ENCODE measurements at regions of chr22 and their contacts with region 1.

Region 1: GRCh38 chr22:17638432-17639246 is at the start of gene BCL2L13:
- DNase-seq: peak; percentile 83 to 94 (median 90)
- H3K4me3 ChIP-seq: peak within 1 kb of the TSS; percentile 54 to 98 (median 90)
- H3K27ac ChIP-seq: peak within 1 kb of the TSS; percentile 77 to 99 (median 96)
- H3K27me3 ChIP-seq: no peaks in the 10 kb centered on the region
- CTCF ChIP-seq: peak in 20 of 56 donors; percentile 6 to 35 (median 21)
- total RNA-seq, gene BCL2L13: 64.1 to 146 (median 96.5) TPM

Region 2: GRCh38 chr22:17381237-17381914 is 257.3 kb before region 1 on chr22:
- intact Hi-C with region 1: loop called in 1 of 2 experiments (anchors 10 kb)
- DNase-seq: no peak
- H3K4me3 ChIP-seq: no peak overlapping the region
- H3K27ac ChIP-seq: no peak overlapping the region
- H3K27me3 ChIP-seq: peaks cover 0 to 6% (median 0%) of the 10 kb centered on the region in 45 donors
- CTCF ChIP-seq: no peak

Region 3: DNA sequence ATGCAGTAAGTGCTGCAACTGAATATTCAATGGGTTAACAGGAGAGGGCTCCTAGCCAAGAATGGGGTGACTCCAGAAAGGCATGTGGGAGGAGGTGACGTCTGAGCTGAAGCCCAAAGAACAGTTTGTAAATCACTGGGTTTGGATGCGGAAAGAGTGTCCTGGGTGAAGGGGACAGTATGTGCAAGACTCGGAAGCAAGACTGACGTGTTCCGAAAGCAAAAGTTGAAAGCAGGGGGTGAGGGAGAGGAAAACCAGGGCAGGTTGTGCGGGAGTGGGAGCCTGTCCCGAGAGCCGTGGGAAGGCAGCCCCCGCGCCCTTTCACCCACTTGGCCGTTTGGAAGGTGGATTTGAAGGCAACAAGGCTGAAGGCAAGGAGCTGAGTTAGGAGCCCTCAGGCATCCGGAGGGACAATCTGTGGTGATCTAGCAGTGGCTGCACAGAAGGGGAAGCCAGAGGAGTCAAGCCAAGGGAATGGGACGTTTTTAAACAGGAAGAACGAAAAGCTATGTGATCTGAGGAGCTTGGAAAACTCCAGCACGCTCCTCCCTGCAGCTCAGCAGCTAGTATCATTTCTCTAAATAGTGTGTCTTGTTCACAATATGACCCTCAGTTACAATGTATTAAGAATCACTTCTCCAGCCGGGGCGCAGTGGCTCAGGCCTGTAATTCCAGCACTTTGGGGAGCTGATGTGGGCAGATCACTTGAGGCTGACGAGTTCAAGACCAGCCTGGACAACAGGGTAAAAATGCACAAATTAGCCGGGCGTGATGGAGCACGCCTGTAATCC is 67.6 kb before region 1 on chr22:
- intact Hi-C with region 1: loop called in 1 of 2 experiments (anchors 5 kb)
- DNase-seq: peak in 9 of 10 donors; percentile 41 to 83 (median 69)
- H3K4me3 ChIP-seq: peak overlapping the region in 54 of 59 donors; percentile 5 to 61 (median 37)
- H3K27ac ChIP-seq: peak overlapping the region; percentile 10 to 99 (median 93)
- H3K27me3 ChIP-seq: no peaks in the 10 kb centered on the region
- CTCF ChIP-seq: no peak

Region 4: GRCh38 chr22:17628304-17629166 is 10.1 kb before region 1 on chr22 and contains the start of gene ATP6V1E1:
- intact Hi-C with region 1: loop called in 1 of 2 experiments (anchors 1 kb)
- DNase-seq: peak; percentile 94 to 99 (median 97)
- H3K4me3 ChIP-seq: peak within 1 kb of the TSS; percentile 68 to 100 (median 99)
- H3K27ac ChIP-seq: peak within 1 kb of the TSS; percentile 55 to 98 (median 92)
- H3K27me3 ChIP-seq: no peaks in the 10 kb centered on the region
- CTCF ChIP-seq: peak in 9 of 56 donors; percentile 7 to 31 (median 14)
- total RNA-seq, gene ATP6V1E1: 113 to 439 (median 333) TPM

Region 5: DNA sequence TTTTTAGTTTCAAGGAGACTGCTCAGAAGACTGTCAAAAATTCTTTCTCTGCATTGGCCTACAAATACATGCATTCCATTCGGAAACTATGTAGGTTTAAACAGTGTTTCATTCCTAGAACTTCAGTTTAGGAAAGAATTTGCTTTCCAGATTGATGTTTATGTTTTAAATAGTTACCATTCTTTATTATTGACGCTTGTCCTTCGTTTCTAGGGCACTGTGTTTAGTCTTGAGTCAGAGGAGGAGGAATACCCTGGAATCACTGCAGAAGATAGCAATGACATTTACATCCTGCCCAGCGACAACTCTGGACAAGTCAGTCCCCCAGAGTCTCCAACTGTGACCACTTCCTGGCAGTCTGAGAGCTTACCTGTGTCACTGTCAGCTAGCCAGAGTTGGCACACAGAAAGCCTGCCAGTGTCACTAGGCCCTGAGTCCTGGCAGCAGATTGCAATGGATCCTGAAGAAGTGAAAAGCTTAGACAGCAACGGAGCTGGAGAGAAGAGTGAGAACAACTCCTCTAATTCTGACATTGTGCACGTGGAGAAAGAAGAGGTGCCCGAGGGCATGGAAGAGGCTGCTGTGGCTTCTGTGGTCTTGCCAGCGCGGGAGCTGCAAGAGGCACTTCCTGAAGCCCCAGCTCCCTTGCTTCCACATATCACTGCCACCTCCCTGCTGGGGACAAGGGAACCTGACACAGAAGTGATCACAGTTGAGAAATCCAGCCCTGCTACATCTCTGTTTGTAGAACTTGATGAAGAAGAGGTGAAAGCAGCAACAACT is 88.0 kb after region 1 on chr22:
- intact Hi-C with region 1: loop called in 1 of 2 experiments (anchors 10 kb)
- DNase-seq: peak in 1 of 10 donors; percentile 74
- H3K4me3 ChIP-seq: no peak overlapping the region
- H3K27ac ChIP-seq: peak overlapping the region in 32 of 59 donors; percentile 7 to 89 (median 52)
- H3K27me3 ChIP-seq: no peaks in the 10 kb centered on the region
- CTCF ChIP-seq: no peak